HEK293 (cell line): ENCODE measurements at regions of chr10 and their contacts with region 1.

Region 1: DNA sequence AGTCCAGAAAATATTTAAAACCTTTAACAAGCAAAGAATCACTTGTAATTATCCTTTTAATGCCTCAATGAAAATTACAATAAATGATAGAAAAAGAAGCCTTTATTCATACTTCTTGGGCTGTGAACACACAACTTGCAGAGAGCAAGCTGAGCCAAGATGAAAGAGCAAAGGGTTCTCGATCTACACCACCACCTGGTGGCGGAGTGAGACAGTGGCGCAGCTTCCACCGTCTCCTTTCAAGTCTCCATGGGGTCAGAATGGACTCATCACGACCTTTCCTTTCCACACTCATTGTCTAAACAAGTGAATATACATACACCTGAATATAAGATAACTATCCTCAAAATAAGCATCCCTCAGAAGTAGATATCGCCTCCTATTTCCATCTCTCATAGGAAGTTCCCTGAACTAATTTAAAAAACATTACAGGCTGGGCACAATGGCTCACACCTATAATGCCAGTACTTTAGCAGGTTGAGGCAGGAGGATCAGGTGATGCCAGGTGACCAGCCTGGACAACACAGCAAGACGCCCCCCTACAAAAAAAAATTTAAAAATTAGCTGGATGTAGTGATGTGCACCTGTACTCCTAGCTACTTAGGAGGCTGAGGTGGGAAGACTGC is 40.7 kb downstream of the ATE1 start:
- H3K4me3 ChIP-seq: no peak overlapping the region
- H3K27ac ChIP-seq: no peak overlapping the region
- H3K4me1 ChIP-seq: no peaks in the 10 kb centered on the region
- CTCF ChIP-seq: peak; percentile 43; the same call in 1 of the 2 replicates

Region 2: GRCh38 chr10:121823993-121824463 is 63.1 kb before region 1 on chr10:
- CTCF ChIA-PET with region 1: interaction called, 58 read pairs
- POLR2A ChIA-PET with region 1: no interaction called
- H3K4me3 ChIP-seq: no peak overlapping the region
- H3K27ac ChIP-seq: no peak overlapping the region
- H3K4me1 ChIP-seq: peaks cover 15% of the 10 kb centered on the region; the same call in 1 of the 2 replicates
- CTCF ChIP-seq: no peak; the same call in 1 of the 2 replicates

Region 3: DNA sequence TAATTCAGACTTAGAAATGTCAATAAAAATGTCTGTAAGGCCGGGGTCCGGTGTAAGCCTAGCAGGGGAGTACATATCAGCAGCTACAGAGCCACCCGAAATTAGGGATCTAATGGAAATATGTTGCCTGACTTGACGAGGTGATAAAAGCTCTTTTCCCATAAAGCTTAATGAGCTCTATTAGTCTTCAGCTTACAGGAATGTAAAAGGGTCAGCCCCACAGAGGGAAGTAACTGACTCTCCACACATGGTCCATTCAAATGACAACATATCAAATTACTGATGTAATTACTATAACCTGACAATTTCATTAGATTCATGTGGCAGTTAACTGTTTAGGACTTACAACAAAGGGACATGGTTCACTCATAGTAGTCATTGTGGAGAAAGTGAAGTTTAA is 21.6 kb before region 1 on chr10:
- CTCF ChIA-PET with region 1: interaction called, 14 read pairs
- POLR2A ChIA-PET with region 1: no interaction called
- H3K4me3 ChIP-seq: no peak overlapping the region
- H3K27ac ChIP-seq: no peak overlapping the region
- H3K4me1 ChIP-seq: peaks cover 8% of the 10 kb centered on the region
- CTCF ChIP-seq: no peak

Region 4: DNA sequence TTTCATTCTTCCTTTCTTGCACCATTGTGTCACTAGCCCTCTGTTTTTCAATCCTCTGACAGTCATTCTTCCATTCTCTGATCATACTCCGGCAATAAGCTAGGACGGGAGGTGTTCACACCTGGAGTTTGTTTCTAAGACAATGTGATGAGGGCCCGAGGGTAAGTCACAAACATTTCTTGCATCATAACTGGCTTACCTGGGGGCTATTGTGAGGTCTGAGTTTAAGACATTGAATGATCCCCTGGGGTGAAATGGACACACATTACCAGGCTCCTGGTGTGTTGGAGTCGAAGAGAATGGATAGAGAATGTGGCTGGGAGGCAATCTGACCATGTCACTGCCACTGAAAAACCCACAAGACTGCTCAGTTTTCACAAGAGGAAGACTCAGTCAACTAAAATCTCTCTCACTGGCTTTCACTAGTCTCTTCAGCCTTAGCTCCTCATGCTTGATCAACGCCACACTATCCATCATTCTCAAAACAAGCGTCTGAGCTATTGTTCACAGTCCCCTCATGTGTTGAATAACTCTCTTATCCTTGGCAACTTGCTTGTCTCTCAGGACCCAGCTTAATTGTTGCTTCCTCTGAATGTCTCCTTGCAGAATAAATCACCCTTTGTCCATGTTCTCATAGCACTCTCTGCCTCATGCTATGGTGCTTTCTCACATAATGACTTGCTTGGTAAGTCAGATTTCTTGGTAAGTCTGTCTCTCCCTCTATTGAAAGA is 812.8 kb after region 1 on chr10 and contains the start of gene C10orf120:
- CTCF ChIA-PET with region 1: no interaction called
- POLR2A ChIA-PET with region 1: no interaction called
- H3K4me3 ChIP-seq: no peak within 1 kb of the TSS
- H3K27ac ChIP-seq: no peak within 1 kb of the TSS
- H3K4me1 ChIP-seq: no peaks in the 10 kb centered on the region
- CTCF ChIP-seq: no peak